Dorsolateral prefrontal cortex (tissue), 120 donors: ENCODE measurements at regions of chr9 and their contacts with region 1.

Region 1: GRCh38 chr9:125143375-125144090 is at the start of gene SCAI:
- DNase-seq: peak; percentile 98 to 100 (median 99)
- H3K4me3 ChIP-seq: peak within 1 kb of the TSS; percentile 33 to 80 (median 68)
- H3K27ac ChIP-seq: peak within 1 kb of the TSS in 42 of 59 donors; percentile 8 to 84 (median 62)
- H3K27me3 ChIP-seq: no peaks in the 10 kb centered on the region
- CTCF ChIP-seq: peak; percentile 93 to 100 (median 99)
- total RNA-seq, gene SCAI: 19.8 to 73.6 (median 49.9) TPM

Region 2: DNA sequence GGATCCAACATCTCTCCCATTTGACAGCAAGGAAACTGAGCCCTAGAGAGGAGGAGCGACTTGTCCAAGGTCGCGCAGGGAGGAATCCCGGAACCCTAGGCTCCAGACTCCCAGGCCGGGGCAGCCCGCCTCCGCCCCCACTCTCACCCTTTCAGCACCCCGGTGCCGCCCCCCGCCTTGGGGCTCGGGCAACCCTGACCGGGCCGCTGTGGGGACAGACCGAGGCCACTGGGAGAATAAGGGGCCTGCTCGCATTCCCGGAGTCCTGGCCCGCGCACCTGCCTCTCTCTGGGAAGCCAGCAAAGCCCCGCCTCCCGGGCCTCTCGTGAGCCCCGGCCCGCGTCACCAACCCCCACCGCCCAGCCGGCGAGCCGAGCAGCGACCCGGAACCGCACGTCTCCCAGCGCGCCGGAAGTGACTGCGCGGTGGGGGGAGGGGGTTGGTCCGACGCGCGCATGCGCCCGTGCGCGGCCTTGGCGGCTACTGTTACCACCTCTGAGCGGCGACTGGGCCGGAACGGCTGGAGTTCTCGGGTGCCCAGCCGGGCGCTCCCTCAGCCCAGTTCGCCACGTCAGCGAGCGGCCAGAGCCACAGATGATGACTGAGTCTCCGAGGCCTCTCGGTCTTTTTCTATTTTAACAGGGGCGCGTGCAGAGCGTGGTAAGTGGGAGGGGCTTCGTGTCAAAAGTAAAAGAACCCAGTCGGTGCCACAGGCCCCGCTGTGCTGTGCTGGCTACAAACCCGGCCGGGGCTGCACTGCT is 202.7 kb before region 1 on chr9 and contains the start of gene GOLGA1:
- intact Hi-C with region 1: loop called (anchors 2 kb)
- DNase-seq: peak; percentile 87 to 95 (median 92)
- H3K4me3 ChIP-seq: peak within 1 kb of the TSS; percentile 58 to 100 (median 95)
- H3K27ac ChIP-seq: peak within 1 kb of the TSS; percentile 63 to 99 (median 96)
- H3K27me3 ChIP-seq: no peaks in the 10 kb centered on the region
- CTCF ChIP-seq: peak in 27 of 56 donors; percentile 5 to 58 (median 28)
- total RNA-seq, gene GOLGA1: 16.5 to 38.0 (median 25.8) TPM